A673 (cell line): ENCODE measurements at regions of chr1 and their contacts with region 1.

Region 1: GRCh38 chr1:29706956-29707355 is 470.6 kb downstream of the PTPRU start:
- DNase-seq: peak; percentile 94
- H3K4me3 ChIP-seq: no peak overlapping the region
- H3K27ac ChIP-seq: peak overlapping the region; percentile 21
- H3K4me1 ChIP-seq: peaks cover 36% of the 10 kb centered on the region
- H3K27me3 ChIP-seq: no peaks in the 10 kb centered on the region
- CTCF ChIP-seq: peak; percentile 81

Region 2: DNA sequence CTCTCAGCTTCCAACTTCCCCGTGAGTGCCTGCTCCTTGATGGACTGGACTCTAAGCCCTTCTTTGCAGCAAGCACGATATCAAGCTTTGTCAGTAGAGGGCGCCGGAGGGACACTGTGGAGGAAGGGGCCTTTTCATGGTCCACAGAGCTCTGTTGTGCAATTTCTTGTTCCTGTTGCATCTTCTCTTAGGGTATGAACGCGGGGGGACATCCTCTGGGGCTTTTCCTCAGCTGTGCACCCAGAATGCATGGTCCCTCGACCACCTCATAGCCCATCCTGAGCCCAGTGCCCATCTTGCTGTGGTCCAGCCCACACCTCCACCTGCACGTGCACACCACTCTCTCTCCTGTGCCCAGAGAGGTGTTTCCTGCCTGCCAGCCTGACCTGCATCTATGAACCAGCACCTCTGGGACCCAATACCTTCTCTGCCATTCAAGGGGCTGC is 86.2 kb after region 1 on chr1:
- CTCF ChIA-PET with region 1: no interaction called
- POLR2A ChIA-PET with region 1: no interaction called
- intact Hi-C with region 1: loop called (anchors 5 kb)
- DNase-seq: peak; percentile 93
- H3K4me3 ChIP-seq: no peak overlapping the region
- H3K27ac ChIP-seq: peak overlapping the region; percentile 83
- H3K4me1 ChIP-seq: peaks cover 6% of the 10 kb centered on the region
- H3K27me3 ChIP-seq: no peaks in the 10 kb centered on the region
- CTCF ChIP-seq: peak; percentile 90

Region 3: GRCh38 chr1:29849038-29849750 is 142.2 kb after region 1 on chr1:
- CTCF ChIA-PET with region 1: no interaction called
- POLR2A ChIA-PET with region 1: no interaction called
- intact Hi-C with region 1: loop called (anchors 5 kb)
- DNase-seq: peak; percentile 68
- H3K4me3 ChIP-seq: no peak overlapping the region
- H3K27ac ChIP-seq: no peak overlapping the region
- H3K4me1 ChIP-seq: no peaks in the 10 kb centered on the region
- H3K27me3 ChIP-seq: no peaks in the 10 kb centered on the region
- CTCF ChIP-seq: peak; percentile 80

Region 4: DNA sequence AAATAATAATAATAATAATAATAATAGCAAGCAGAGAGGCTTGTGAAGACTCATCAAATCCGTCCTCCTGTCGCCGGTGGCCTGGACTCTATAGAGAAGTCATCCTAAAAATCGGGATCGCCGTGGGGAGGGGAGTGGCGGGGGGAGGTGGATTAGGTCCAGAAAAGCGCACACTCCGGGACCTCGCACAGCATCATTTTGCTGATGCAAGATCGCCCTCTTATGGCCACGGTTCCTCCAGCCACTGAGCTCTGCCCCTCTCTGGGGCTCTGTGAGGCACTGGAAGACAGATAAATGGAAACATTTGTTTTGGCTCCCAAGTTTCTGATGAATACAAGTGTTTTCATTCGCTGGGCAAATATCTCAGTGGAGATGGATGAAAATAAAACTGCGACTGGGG is 404.5 kb after region 1 on chr1:
- CTCF ChIA-PET with region 1: no interaction called
- POLR2A ChIA-PET with region 1: no interaction called
- intact Hi-C with region 1: loop called (anchors 2 kb)
- DNase-seq: peak; percentile 83
- H3K4me3 ChIP-seq: no peak overlapping the region
- H3K27ac ChIP-seq: peak overlapping the region; percentile 55
- H3K4me1 ChIP-seq: peaks cover 8% of the 10 kb centered on the region
- H3K27me3 ChIP-seq: no peaks in the 10 kb centered on the region
- CTCF ChIP-seq: peak; percentile 77